HepG2 (cell line): ENCODE measurements at regions of chr12 and their contacts with region 1.

Region 1: GRCh38 chr12:50572271-50572670 is 67.5 kb downstream of the DIP2B start:
- DNase-seq: peak; percentile 84
- ATAC-seq: peak; percentile 63
- H3K4me3 ChIP-seq: peak overlapping the region in 1 of 3 experiments; percentile 10; a peak in 1 of 6 replicates
- H3K27ac ChIP-seq: peak overlapping the region; percentile 45
- H3K4me1 ChIP-seq: peaks cover 93% of the 10 kb centered on the region
- H3K27me3 ChIP-seq: no peaks in the 10 kb centered on the region; a peak in 1 of 5 replicates
- CTCF ChIP-seq: no peak
- EP300 ChIP-seq: peak in 1 of 2 experiments; percentile 65; a peak in 2 of 4 replicates
- POLR2A ChIP-seq: no peak
- RAD21 ChIP-seq: no peak

Region 2: GRCh38 chr12:50614167-50614759 is 42.0 kb after region 1 on chr12:
- CTCF ChIA-PET with region 1: no interaction called
- POLR2A ChIA-PET with region 1: no interaction called
- in situ Hi-C with region 1: no loop called
- intact Hi-C with region 1: loop called (anchors 10 kb)
- DNase-seq: no peak
- ATAC-seq: no peak
- H3K4me3 ChIP-seq: no peak overlapping the region
- H3K27ac ChIP-seq: no peak overlapping the region
- H3K4me1 ChIP-seq: peaks cover 48% of the 10 kb centered on the region
- H3K27me3 ChIP-seq: no peaks in the 10 kb centered on the region
- CTCF ChIP-seq: no peak
- EP300 ChIP-seq: no peak
- POLR2A ChIP-seq: no peak
- RAD21 ChIP-seq: no peak

Region 3: GRCh38 chr12:50637870-50638481 is 65.7 kb after region 1 on chr12:
- CTCF ChIA-PET with region 1: no interaction called
- POLR2A ChIA-PET with region 1: no interaction called
- in situ Hi-C with region 1: no loop called
- intact Hi-C with region 1: loop called (anchors 10 kb)
- DNase-seq: peak; percentile 40
- ATAC-seq: no peak
- H3K4me3 ChIP-seq: no peak overlapping the region
- H3K27ac ChIP-seq: no peak overlapping the region
- H3K4me1 ChIP-seq: peaks cover 49% of the 10 kb centered on the region
- H3K27me3 ChIP-seq: no peaks in the 10 kb centered on the region
- CTCF ChIP-seq: peak; percentile 65
- EP300 ChIP-seq: no peak
- POLR2A ChIP-seq: no peak
- RAD21 ChIP-seq: peak; percentile 27; the same call in 1 of the 2 replicates